ENCODE measurements at regions of chr1 and their contacts with region 1.

Region 1: DNA sequence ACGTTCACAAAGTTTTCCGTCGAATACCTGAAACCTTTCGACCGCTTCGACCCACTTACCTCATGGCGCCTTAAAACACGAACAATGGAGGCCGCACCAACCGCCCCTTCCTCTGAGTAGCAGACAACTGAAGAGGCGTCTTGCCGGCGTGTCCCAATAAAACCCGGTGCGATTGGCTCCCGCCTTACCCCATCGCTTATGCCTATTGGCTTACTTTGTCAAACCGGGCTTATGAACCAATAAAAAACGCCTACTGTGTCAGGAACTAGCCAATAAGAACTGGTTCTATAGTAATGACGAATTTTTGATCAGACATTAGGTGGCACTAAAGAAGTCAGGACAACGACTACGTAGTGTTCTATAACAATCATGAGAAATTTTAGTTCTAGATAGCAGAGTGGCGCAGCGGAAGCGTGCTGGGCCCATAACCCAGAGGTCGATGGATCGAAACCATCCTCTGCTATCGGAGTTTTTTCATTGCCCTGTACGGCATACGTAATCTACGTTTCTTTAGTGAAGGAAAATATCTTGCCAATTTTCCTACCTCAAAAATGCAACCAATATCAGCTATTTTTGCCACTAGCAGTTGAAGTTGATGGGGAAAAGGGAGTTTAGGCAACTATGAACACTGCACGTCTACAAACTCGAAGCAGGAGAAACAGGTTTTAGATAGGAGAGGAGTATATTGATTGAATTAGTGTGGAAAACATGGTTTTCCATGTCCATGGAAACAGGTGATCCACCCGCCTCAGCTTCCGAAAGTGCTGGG is at the start of gene ILF2:
- DNase-seq: peak; percentile 94 to 100
- H3K4me3 ChIP-seq: peak within 1 kb of the TSS; percentile 75
- H3K27ac ChIP-seq: peak within 1 kb of the TSS; percentile 72
- H3K4me1 ChIP-seq: peaks cover 13% of the 10 kb centered on the region
- H3K27me3 ChIP-seq: no peaks in the 10 kb centered on the region
- CTCF ChIP-seq: 0 out of 2 replicates have a peak, but pooled peaks have one; percentile 14
- total RNA-seq, gene ILF2: 131 and 145 TPM in 2 replicates

Region 2: GRCh38 chr1:153352523-153352922 is 318.5 kb before region 1 on chr1:
- CTCF ChIA-PET with region 1: no interaction called
- POLR2A ChIA-PET with region 1: no interaction called
- intact Hi-C with region 1: loop called (anchors 10 kb)
- DNase-seq: peak; percentile 57 to 61
- H3K4me3 ChIP-seq: no peak overlapping the region
- H3K27ac ChIP-seq: no peak overlapping the region
- H3K4me1 ChIP-seq: peaks cover 27% of the 10 kb centered on the region
- H3K27me3 ChIP-seq: peaks cover 8% of the 10 kb centered on the region; the same call in 1 of the 2 replicates
- CTCF ChIP-seq: peak; percentile 93

Region 3: DNA sequence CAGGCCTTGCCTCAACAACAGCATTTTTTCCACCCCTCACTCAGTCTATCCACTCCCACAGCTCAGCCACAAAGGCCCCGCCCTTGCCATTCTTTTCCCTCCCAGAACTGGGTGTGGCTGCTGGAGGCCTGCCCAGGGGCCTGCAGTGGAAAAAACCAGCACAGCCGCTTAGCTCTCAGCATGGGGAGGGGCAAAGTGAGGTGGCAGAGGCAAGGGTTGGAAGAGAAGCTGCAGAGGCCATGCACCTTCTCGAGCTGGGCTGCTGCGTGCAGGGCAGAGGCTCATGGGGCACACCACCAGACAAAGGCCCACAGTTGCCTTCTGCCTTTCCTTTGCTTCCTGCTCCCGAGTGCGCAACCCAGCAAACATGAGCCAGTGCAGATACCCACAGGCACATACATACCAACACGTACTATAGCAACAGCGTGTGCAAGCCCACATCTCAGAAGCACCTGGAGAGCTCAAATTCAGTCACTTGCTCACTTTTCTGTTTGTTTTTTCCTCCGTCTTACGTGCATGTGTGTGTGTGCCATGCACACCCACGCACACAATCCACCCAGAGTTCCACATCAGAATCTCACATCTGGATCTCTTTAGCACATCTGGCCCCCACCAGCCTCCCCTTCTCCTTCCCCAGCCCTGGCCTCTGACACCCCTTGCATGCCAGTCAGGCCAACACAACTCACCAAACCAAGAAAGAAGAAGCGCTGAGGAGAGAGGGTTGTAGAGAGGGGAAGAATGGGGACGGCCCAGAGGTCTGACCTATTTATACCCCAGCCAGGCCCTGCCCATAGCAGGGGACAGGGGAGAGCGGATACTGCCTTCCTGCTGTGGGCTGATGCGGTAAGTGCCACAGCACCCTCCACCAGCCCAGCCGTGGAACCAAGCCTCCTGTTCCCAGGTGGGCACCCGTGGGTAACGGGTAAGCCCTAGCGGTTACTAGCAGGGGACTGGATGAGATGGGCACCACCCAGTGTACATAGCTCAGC is 125.7 kb before region 1 on chr1 and contains the start of gene S100A4:
- CTCF ChIA-PET with region 1: no interaction called
- POLR2A ChIA-PET with region 1: interaction called, 14 read pairs
- intact Hi-C with region 1: no loop called
- DNase-seq: peak; percentile 91 to 98
- H3K4me3 ChIP-seq: peak within 1 kb of the TSS; percentile 61
- H3K27ac ChIP-seq: peak within 1 kb of the TSS; percentile 67
- H3K4me1 ChIP-seq: peaks cover 91% of the 10 kb centered on the region
- H3K27me3 ChIP-seq: no peaks in the 10 kb centered on the region
- CTCF ChIP-seq: no peak
- total RNA-seq, gene S100A4: 303 and 346 TPM in 2 replicates

Region 4: GRCh38 chr1:153616144-153616916 is 54.7 kb before region 1 on chr1 and contains the start of gene S100A14:
- CTCF ChIA-PET with region 1: no interaction called
- POLR2A ChIA-PET with region 1: interaction called, 10 read pairs
- intact Hi-C with region 1: no loop called
- DNase-seq: peak; percentile 73 to 89
- H3K4me3 ChIP-seq: peak within 1 kb of the TSS; percentile 66
- H3K27ac ChIP-seq: peak within 1 kb of the TSS; percentile 56
- H3K4me1 ChIP-seq: peaks cover 44% of the 10 kb centered on the region
- H3K27me3 ChIP-seq: no peaks in the 10 kb centered on the region
- CTCF ChIP-seq: no peak
- total RNA-seq, gene S100A14: 411 and 486 TPM in 2 replicates

Region 5: DNA sequence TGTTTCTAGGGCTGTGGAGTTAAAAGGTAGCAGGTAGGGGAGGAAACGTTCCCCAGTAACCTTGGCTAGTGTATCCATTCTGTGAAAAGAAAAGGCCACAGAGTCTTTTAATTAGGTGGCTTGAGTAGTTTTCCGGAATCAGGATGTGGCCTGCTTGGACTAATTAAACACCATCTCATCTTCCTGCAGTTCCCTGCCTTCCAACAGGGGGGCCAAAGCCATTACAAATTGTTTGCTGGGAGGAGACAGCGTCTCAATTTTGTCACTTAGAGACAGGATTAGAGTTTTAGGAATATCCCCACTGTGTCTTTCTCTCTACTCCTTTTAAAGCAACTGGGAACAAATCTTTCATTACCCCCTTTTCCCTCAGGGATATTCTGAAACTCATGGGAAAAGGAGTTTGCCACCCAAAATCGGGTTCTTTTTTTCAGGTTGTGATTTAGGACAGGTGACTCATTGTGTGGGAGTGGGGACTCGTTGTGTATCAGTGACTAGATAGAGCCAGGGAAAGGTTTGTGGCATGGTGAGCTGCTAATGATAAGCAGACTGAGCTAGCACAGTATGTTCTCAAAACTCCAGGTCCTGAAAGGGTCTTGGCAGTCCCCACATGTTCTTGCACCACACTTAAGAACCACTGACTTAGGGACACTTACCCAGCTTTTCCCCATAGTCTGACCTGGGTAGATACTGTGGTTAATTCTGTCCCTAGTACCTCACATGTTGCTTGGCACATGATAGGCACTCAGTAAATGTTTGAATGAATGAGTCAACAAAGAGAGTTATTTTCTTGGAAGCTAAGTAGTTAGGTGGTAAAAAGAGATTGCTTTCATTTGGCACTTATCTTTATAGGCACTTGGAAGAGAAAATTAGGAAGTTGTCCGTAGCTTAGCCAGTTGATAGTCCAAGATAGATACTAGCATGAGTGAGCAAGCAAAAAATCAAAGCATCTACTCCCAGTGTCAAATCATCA is 79.3 kb after region 1 on chr1:
- CTCF ChIA-PET with region 1: no interaction called
- POLR2A ChIA-PET with region 1: no interaction called
- intact Hi-C with region 1: no loop called
- DNase-seq: no peak
- H3K4me3 ChIP-seq: no peak overlapping the region
- H3K27ac ChIP-seq: no peak overlapping the region
- H3K4me1 ChIP-seq: no peaks in the 10 kb centered on the region
- H3K27me3 ChIP-seq: no peaks in the 10 kb centered on the region
- CTCF ChIP-seq: no peak

Region 6: GRCh38 chr1:153936011-153936802 is 265.2 kb after region 1 on chr1:
- CTCF ChIA-PET with region 1: no interaction called
- POLR2A ChIA-PET with region 1: no interaction called
- intact Hi-C with region 1: no loop called
- DNase-seq: no peak
- H3K4me3 ChIP-seq: no peak overlapping the region
- H3K27ac ChIP-seq: no peak overlapping the region
- H3K4me1 ChIP-seq: no peaks in the 10 kb centered on the region
- H3K27me3 ChIP-seq: no peaks in the 10 kb centered on the region
- CTCF ChIP-seq: no peak

Region 7: GRCh38 chr1:154272217-154272998 is 601.4 kb after region 1 on chr1 and contains the start of gene HAX1:
- CTCF ChIA-PET with region 1: no interaction called
- POLR2A ChIA-PET with region 1: no interaction called
- intact Hi-C with region 1: loop called (anchors 5 kb)
- DNase-seq: peak; percentile 87 to 94
- H3K4me3 ChIP-seq: peak within 1 kb of the TSS; percentile 95
- H3K27ac ChIP-seq: peak within 1 kb of the TSS; percentile 78
- H3K4me1 ChIP-seq: peaks cover 10% of the 10 kb centered on the region
- H3K27me3 ChIP-seq: no peaks in the 10 kb centered on the region
- CTCF ChIP-seq: peak; percentile 86
- total RNA-seq, gene HAX1: 89.7 and 92.3 TPM in 2 replicates

Measured in PC-9 (cell line).